Naive thymus-derived CD4-positive, alpha-beta T cell (primary cell): ENCODE measurements at regions of chr17 and their contacts with region 1.

Region 1: DNA sequence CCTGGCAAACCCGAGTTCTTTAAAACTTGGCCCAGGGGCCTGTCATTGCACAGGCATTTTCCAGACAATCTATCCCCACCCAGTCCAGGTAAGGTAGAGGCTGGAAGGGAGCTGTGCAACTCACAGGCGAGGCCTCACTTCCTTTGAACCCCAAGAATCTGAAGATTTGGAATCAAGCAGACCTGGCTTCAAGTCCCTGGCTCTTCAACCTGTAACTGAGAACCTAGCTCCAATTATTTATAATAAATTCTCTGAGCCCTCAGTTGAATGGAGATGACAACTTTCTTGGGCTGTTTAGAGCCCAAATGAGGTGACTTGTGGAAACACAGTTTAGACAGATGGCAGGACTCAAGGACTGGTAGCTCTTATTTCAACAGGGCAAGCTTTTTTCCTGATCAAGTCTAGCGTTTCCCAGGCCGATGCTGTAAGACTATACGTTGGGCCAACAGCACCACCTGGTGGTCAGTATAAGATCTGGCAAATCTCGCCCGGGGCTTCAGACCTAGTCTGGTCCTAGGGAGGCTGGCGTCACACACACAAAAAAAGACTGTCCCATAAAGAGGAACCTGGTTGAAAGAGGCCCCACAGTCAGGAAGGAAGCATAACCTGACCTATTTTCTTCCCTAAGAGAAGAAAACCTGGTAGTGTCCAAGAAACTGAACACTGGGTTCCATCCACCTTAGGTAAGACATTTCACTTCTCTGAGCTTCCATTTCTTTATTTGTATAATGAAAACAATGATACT is 117.9 kb downstream of the C17orf67 start:
- DNase-seq: peak; percentile 56 to 79 (median 70)
- ATAC-seq: peak; percentile 96
- H3K4me3 ChIP-seq: no peak overlapping the region
- H3K4me3 Mint-ChIP-seq: peak overlapping the region in 1 of 10 donors; percentile 14
- H3K27ac ChIP-seq: no peak overlapping the region
- H3K27ac Mint-ChIP-seq: peak overlapping the region in 1 of 9 donors; percentile 13
- H3K4me1 ChIP-seq: no peaks in the 10 kb centered on the region
- H3K4me1 Mint-ChIP-seq: peaks cover 4 to 13% (median 8%) of the 10 kb centered on the region in 7 donors
- H3K27me3 ChIP-seq: no peaks in the 10 kb centered on the region
- H3K27me3 Mint-ChIP-seq: peaks cover 0 to 4% (median 0%) of the 10 kb centered on the region in 5 donors

Region 2: DNA sequence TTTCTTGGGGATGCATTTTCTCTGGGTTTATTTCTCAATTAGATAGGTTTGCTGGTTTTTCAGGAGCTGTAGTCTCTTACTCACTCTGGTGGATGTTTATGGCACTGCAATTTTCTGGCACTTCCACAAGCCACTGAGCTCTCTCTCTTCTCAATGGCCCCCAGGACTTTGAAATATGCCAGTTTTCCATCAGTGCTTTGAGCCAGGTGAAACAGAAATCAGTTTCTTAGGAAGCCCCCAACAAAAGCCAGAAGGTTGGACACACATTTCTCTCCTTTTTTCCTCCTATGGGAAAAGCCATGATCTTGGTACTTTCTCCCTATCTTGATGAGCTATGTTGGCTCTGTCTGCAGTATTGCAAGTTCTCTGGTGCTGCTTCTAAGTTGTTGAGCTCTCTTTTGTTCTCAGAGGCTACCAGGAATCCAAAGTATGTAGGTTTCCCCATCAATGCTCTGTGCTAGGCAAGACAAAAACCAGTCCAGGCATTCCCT is 1113.9 kb before region 1 on chr17:
- CTCF ChIA-PET with region 1: no interaction called
- POLR2A ChIA-PET with region 1: no interaction called
- intact Hi-C with region 1: loop called in 1 of 2 experiments (anchors 10 kb)
- DNase-seq: peak in 6 of 9 donors; percentile 13 to 44 (median 28)
- ATAC-seq: peak; percentile 50
- H3K4me3 ChIP-seq: no peak overlapping the region
- H3K4me3 Mint-ChIP-seq: no peak overlapping the region
- H3K27ac ChIP-seq: no peak overlapping the region
- H3K27ac Mint-ChIP-seq: no peak overlapping the region
- H3K4me1 ChIP-seq: no peaks in the 10 kb centered on the region
- H3K4me1 Mint-ChIP-seq: no peaks in the 10 kb centered on the region
- H3K27me3 ChIP-seq: no peaks in the 10 kb centered on the region
- H3K27me3 Mint-ChIP-seq: peaks cover 11 to 28% (median 19%) of the 10 kb centered on the region in 5 donors

Region 3: GRCh38 chr17:55717898-55718735 is 997.7 kb before region 1 on chr17:
- CTCF ChIA-PET with region 1: no interaction called
- POLR2A ChIA-PET with region 1: no interaction called
- intact Hi-C with region 1: loop called in 1 of 2 experiments (anchors 1 kb)
- DNase-seq: peak; percentile 20 to 58 (median 38)
- ATAC-seq: peak; percentile 49
- H3K4me3 ChIP-seq: no peak overlapping the region
- H3K4me3 Mint-ChIP-seq: no peak overlapping the region
- H3K27ac ChIP-seq: no peak overlapping the region
- H3K27ac Mint-ChIP-seq: no peak overlapping the region
- H3K4me1 ChIP-seq: no peaks in the 10 kb centered on the region
- H3K4me1 Mint-ChIP-seq: no peaks in the 10 kb centered on the region
- H3K27me3 ChIP-seq: no peaks in the 10 kb centered on the region
- H3K27me3 Mint-ChIP-seq: peaks cover 14 to 29% (median 27%) of the 10 kb centered on the region in 5 donors

Region 4: GRCh38 chr17:56499799-56500388 is 215.9 kb before region 1 on chr17:
- CTCF ChIA-PET with region 1: interaction called, 48 read pairs
- POLR2A ChIA-PET with region 1: interaction called, 6 read pairs
- intact Hi-C with region 1: loop called in 1 of 2 experiments (anchors 1 kb)
- DNase-seq: peak in 7 of 9 donors; percentile 7 to 45 (median 32)
- ATAC-seq: no peak
- H3K4me3 ChIP-seq: no peak overlapping the region
- H3K4me3 Mint-ChIP-seq: no peak overlapping the region
- H3K27ac ChIP-seq: no peak overlapping the region
- H3K27ac Mint-ChIP-seq: no peak overlapping the region
- H3K4me1 ChIP-seq: no peaks in the 10 kb centered on the region
- H3K4me1 Mint-ChIP-seq: no peaks in the 10 kb centered on the region
- H3K27me3 ChIP-seq: no peaks in the 10 kb centered on the region
- H3K27me3 Mint-ChIP-seq: peaks cover 0 to 6% (median 0%) of the 10 kb centered on the region in 5 donors

Region 5: DNA sequence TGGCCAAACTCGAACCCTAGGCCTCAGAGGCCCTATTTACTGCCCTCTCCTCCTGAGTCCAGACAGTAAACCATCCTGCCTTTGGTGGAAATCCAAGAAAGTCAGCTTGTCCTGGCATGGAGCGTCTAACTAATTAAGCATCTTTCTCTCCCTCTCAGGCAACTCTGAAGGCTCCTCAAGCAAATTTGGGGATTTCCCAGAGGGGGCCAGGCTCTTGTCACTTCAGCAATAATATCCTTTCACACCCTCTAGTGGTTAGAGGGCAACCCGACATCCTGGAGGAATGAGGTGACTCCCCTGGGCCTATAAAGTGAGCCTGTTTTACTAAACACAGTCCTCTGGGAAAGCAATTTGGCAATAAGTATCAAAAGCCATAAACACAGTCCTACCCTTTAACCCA is 61.9 kb before region 1 on chr17:
- CTCF ChIA-PET with region 1: interaction called, 15 read pairs
- POLR2A ChIA-PET with region 1: interaction called, 12 read pairs
- intact Hi-C with region 1: loop called (anchors 1 kb)
- DNase-seq: peak; percentile 15 to 88 (median 83)
- ATAC-seq: peak; percentile 99
- H3K4me3 ChIP-seq: no peak overlapping the region
- H3K4me3 Mint-ChIP-seq: peak overlapping the region in 4 of 10 donors; percentile 10 to 55 (median 34)
- H3K27ac ChIP-seq: peak overlapping the region; percentile 59
- H3K27ac Mint-ChIP-seq: peak overlapping the region in 8 of 9 donors; percentile 44 to 93 (median 88)
- H3K4me1 ChIP-seq: peaks cover 0 to 6% of the 10 kb centered on the region in 2 donors
- H3K4me1 Mint-ChIP-seq: peaks cover 5 to 21% (median 9%) of the 10 kb centered on the region in 7 donors
- H3K27me3 ChIP-seq: no peaks in the 10 kb centered on the region
- H3K27me3 Mint-ChIP-seq: peaks cover 0 to 18% (median 0%) of the 10 kb centered on the region in 5 donors

Region 6: DNA sequence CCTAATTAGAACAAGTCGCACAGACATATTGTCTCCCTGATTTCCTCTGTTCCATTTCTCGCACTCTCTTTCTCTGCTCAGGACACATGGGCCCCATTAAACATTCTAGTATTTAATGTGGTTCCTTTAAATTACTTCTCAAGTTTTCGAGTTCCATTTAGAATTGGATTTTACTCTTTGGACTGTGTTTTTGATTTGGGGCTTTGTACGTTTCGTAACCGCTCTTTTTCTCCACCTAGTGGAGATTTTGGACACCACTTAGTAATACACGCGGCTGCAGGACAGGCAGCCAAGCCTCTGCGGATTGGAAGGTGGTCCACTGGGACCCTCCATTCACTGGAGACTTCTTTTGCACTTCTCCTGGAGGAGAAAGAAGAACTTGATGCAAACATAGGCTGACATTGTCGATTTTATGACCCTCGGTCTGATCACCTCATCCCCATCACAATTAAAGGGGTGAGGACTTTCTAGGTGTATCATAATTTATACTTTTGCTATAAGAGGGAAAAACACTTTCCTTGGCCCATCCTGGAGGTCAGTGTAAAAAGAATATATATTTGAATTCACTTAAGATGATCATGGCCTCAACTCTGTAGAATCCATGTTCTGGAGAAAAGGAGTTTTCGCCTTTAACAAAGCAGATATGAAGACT is 36.5 kb before region 1 on chr17:
- CTCF ChIA-PET with region 1: interaction called, 7 read pairs
- POLR2A ChIA-PET with region 1: interaction called, 3 read pairs
- intact Hi-C with region 1: loop called (anchors 1 to 5 kb)
- DNase-seq: peak in 5 of 9 donors; percentile 30 to 47 (median 40)
- ATAC-seq: peak; percentile 65
- H3K4me3 ChIP-seq: peak overlapping the region; percentile 40
- H3K4me3 Mint-ChIP-seq: peak overlapping the region in 9 of 10 donors; percentile 77 to 91 (median 86)
- H3K27ac ChIP-seq: no peak overlapping the region
- H3K27ac Mint-ChIP-seq: peak overlapping the region in 2 of 9 donors; percentile 9 to 10
- H3K4me1 ChIP-seq: peaks cover 19 to 20% of the 10 kb centered on the region in 2 donors
- H3K4me1 Mint-ChIP-seq: peaks cover 7 to 23% (median 17%) of the 10 kb centered on the region in 7 donors
- H3K27me3 ChIP-seq: no peaks in the 10 kb centered on the region
- H3K27me3 Mint-ChIP-seq: peaks cover 12 to 52% (median 31%) of the 10 kb centered on the region in 5 donors

Region 7: DNA sequence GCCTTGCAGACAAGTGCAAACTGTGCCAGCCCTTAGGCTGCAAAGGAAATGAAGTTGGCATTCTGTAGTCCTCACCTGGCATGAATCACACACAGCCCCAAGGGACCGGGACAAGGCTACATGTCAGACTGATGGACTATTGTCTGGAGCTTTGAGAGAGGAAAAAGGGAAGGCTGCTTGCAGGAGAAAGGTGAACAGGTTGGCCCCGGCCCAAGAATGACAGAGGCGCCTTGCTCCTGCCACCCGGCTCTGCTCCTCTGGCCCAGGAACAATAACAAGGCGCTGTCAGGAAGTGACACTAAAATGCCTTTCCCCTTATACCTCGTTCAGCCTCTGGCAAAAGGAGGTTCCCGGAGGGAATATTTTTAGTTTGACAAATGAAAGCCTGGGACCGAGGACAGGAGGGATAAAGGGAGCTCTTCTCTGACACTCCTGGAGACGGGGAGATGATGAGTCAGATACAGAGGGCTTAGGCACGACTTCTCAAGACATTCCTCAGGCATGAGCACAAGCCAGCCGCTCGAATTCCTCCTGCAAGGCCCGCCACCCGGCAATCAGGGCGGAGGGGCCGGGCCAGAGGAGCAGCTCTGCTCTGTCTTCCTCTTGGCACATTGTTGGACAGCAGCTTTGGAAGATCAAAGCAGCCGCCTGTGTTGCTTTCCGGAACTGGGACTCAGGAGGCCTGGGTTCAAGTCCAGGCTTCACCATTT is 16.4 kb before region 1 on chr17:
- CTCF ChIA-PET with region 1: no interaction called
- POLR2A ChIA-PET with region 1: no interaction called
- intact Hi-C with region 1: no loop called
- DNase-seq: no peak
- ATAC-seq: no peak
- H3K4me3 ChIP-seq: no peak overlapping the region
- H3K4me3 Mint-ChIP-seq: no peak overlapping the region
- H3K27ac ChIP-seq: no peak overlapping the region
- H3K27ac Mint-ChIP-seq: no peak overlapping the region
- H3K4me1 ChIP-seq: no peaks in the 10 kb centered on the region
- H3K4me1 Mint-ChIP-seq: peaks cover 0 to 2% (median 0%) of the 10 kb centered on the region in 7 donors
- H3K27me3 ChIP-seq: no peaks in the 10 kb centered on the region
- H3K27me3 Mint-ChIP-seq: peaks cover 0 to 27% (median 0%) of the 10 kb centered on the region in 5 donors

Region 8: GRCh38 chr17:56939901-56940343 is 224.1 kb after region 1 on chr17:
- CTCF ChIA-PET with region 1: no interaction called
- POLR2A ChIA-PET with region 1: no interaction called
- intact Hi-C with region 1: loop called in 1 of 2 experiments (anchors 5 kb)
- DNase-seq: peak in 7 of 9 donors; percentile 27 to 64 (median 52)
- ATAC-seq: peak; percentile 80
- H3K4me3 ChIP-seq: no peak overlapping the region
- H3K4me3 Mint-ChIP-seq: no peak overlapping the region
- H3K27ac ChIP-seq: no peak overlapping the region
- H3K27ac Mint-ChIP-seq: peak overlapping the region in 5 of 9 donors; percentile 4 to 85 (median 65)
- H3K4me1 ChIP-seq: no peaks in the 10 kb centered on the region
- H3K4me1 Mint-ChIP-seq: peaks cover 0 to 19% (median 0%) of the 10 kb centered on the region in 7 donors
- H3K27me3 ChIP-seq: no peaks in the 10 kb centered on the region
- H3K27me3 Mint-ChIP-seq: no peaks in the 10 kb centered on the region